Heart right ventricle (tissue), 16 donors: ENCODE measurements at regions of chr4 and their contacts with region 1.

Region 1: GRCh38 chr4:38275331-38276100 is 315.3 kb downstream of the PTTG2 start:
- DNase-seq: no peak
- ATAC-seq: no peak
- H3K4me3 ChIP-seq: no peak overlapping the region
- H3K27ac ChIP-seq: no peak overlapping the region
- H3K4me1 ChIP-seq: peaks cover 0 to 6% (median 0%) of the 10 kb centered on the region in 9 donors
- H3K27me3 ChIP-seq: no peaks in the 10 kb centered on the region
- CTCF ChIP-seq: no peak

Region 2: DNA sequence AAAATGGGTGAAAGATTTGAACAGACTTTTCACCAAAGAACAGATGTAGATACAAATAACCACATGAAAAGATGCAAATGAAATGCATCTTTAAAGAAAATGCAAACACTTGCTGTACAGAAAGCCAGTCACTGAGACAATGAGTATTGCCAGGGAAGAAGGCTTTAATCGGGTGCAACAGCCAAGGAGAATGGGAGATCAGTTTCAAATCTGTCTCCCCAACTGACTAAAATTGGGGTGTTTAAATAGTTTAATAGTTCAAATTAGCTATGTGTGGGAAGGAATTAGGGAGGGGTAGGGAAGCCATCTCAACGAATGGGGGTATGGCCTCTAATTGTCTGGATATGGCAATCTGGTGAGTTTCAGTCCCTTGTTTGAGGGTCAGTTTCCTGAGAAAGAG is 19.9 kb before region 1 on chr4:
- intact Hi-C with region 1: loop called in 1 of 10 experiments (anchors 1 kb)
- DNase-seq: no peak
- ATAC-seq: no peak
- H3K4me3 ChIP-seq: no peak overlapping the region
- H3K27ac ChIP-seq: no peak overlapping the region
- H3K4me1 ChIP-seq: no peaks in the 10 kb centered on the region
- H3K27me3 ChIP-seq: no peaks in the 10 kb centered on the region
- CTCF ChIP-seq: no peak

Region 3: GRCh38 chr4:38343608-38344007 is 68.1 kb after region 1 on chr4:
- intact Hi-C with region 1: no loop called
- DNase-seq: no peak
- ATAC-seq: no peak
- H3K4me3 ChIP-seq: no peak overlapping the region
- H3K27ac ChIP-seq: no peak overlapping the region
- H3K4me1 ChIP-seq: no peaks in the 10 kb centered on the region
- H3K27me3 ChIP-seq: no peaks in the 10 kb centered on the region
- CTCF ChIP-seq: no peak

Region 4: GRCh38 chr4:38400946-38401345 is 125.4 kb after region 1 on chr4:
- intact Hi-C with region 1: no loop called
- DNase-seq: no peak
- ATAC-seq: no peak
- H3K4me3 ChIP-seq: no peak overlapping the region
- H3K27ac ChIP-seq: no peak overlapping the region
- H3K4me1 ChIP-seq: peaks cover 0 to 14% (median 0%) of the 10 kb centered on the region in 9 donors
- H3K27me3 ChIP-seq: no peaks in the 10 kb centered on the region
- CTCF ChIP-seq: no peak

Region 5: DNA sequence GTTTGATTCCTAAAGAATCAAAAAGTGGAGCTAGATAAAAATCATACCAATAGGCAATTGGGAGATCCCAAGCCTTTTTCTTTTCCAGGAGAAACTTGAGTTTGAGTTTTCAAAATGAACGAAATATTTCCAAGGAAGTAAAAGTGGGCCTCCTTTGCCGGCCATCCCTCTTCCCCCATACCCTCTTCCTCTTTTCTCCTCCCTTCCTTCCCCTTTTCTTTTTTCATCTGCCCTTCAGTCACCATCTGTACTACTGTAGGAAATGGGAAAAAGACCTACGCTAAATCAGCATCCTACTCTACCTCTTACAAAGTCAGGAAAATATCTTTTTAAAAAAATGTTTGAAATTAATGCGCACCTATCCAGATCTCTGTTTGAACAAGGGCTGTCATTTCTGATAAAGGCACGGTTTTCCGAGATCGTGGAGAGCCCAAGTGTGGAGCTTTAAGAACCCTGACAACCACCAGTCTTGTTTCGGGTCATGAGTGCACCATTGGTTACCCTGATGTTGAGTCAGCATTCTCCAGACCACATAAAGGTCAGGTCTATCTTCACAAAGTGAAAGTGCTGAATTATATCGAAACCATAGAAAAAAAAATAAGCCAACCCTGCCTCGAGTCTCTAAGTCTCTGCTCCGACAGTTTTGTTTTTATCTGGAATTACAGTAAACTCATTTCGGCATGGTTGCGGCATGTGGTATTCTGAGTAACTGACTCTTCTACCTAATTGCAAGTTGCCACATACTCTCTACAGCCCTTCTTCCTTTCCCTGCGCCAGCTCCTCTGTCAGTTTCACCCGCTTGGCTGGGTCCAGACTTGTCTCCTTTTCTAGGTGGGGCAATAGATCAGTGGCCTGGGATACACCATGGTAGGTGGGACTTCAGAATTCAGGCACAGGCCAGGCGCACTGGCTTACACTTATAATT is 248.3 kb after region 1 on chr4:
- intact Hi-C with region 1: no loop called
- DNase-seq: no peak
- ATAC-seq: peak in 5 of 8 donors; percentile 46 to 64 (median 61)
- H3K4me3 ChIP-seq: peak overlapping the region in 1 of 10 donors; percentile 16
- H3K27ac ChIP-seq: peak overlapping the region in 1 of 10 donors; percentile 85
- H3K4me1 ChIP-seq: peaks cover 0 to 44% (median 0%) of the 10 kb centered on the region in 9 donors
- H3K27me3 ChIP-seq: no peaks in the 10 kb centered on the region
- CTCF ChIP-seq: no peak